Endothelial cell of umbilical vein (primary cell): ENCODE measurements at regions of chr17 and their contacts with region 1.

Region 1: DNA sequence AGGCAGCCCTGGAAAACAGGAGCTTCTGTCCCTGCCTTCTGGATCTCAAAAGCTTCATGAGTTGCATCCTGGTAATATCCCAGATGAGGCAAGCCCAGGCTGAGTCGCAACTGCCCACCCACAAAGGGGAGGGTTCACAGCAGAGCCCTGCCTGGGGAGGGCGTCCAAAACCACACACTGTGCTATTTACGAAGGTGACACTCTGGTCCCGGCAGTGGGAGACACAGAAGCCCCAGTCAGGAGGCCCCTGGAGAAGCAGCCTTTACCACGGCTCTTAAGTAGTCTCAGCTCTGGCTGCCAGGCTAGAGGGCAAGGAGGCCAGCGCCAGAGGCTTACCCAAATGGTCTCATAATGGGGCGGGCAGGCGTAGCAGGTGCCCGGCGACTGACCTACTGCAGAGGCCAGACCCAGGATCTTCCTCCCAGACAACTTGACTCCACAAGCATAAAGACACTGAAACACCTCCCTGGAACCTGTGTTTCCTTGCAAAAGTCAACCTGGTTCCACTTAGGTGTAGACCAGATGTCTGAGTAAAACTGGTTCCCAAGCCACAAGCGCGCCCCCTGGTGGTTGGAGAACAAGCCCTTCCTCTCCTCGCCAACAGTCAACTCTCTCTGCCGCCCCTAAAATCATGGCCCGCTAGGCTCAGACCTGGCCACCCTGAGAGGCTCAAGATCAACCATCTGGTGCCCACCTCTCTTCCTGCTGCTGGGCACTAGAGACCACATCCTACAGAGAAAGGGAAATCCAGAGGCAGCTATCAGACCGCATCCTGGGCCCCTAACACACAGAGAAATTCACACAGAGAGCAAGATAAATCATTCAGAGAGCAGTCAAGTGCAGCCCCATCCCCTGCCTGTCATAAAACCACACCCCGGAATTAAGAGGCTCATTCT is 5.2 kb downstream of the AXIN2 start:
- DNase-seq: peak; percentile 21
- H3K4me3 ChIP-seq: no peak overlapping the region
- H3K27ac ChIP-seq: no peak overlapping the region
- H3K4me1 ChIP-seq: peaks cover 5% of the 10 kb centered on the region
- H3K27me3 ChIP-seq: peaks cover 4 to 5% of the 10 kb centered on the region in 2 experiments
- CTCF ChIP-seq: peak; percentile 76 to 79
- POLR2A ChIP-seq: no peak

Region 2: GRCh38 chr17:65359016-65359415 is 197.2 kb before region 1 on chr17:
- CTCF ChIA-PET with region 1: no interaction called
- POLR2A ChIA-PET with region 1: no interaction called
- dilution Hi-C with region 1: no loop called
- intact Hi-C with region 1: loop called (anchors 2 kb)
- DNase-seq: peak; percentile 66
- H3K4me3 ChIP-seq: no peak overlapping the region
- H3K27ac ChIP-seq: no peak overlapping the region
- H3K4me1 ChIP-seq: peaks cover 9% of the 10 kb centered on the region
- H3K27me3 ChIP-seq: peaks cover 0 to 2% of the 10 kb centered on the region in 2 experiments
- CTCF ChIP-seq: no peak
- POLR2A ChIP-seq: no peak